ENCODE measurements at regions of chr7 and their contacts with region 1.

Region 1: DNA sequence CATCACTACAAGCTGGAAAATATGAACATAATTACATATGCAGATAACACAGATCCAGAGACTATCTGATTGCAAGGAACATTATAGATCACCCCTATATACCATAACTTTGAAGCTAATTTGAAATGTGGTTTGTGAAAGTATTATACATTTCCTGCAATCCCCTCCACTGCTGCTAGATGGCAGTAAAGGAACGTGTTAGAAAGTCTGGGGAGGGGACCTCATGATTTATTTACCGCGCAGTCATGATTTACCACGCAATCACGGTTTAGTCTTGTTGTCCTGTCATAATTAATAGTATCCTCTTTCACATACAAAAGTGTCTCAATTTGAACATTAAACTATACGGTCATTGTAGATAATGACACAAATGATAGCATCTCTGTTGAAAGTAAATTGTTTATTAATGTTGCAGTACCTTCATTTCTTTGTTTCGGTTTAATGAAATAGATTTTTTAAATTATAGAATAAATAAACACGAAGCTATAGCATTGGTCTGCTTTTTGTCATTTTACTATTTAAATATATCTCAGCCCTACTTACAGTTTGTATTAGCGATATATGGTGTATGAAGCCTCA is 145.3 kb upstream of the PRSS1 start:
- DNase-seq: peak; percentile 69
- ATAC-seq: peak; percentile 60
- H3K4me3 Mint-ChIP-seq: peak overlapping the region; percentile 31
- H3K27ac Mint-ChIP-seq: peak overlapping the region; percentile 67
- H3K4me1 Mint-ChIP-seq: peaks cover 23% of the 10 kb centered on the region
- H3K27me3 Mint-ChIP-seq: peaks cover 3% of the 10 kb centered on the region

Region 2: DNA sequence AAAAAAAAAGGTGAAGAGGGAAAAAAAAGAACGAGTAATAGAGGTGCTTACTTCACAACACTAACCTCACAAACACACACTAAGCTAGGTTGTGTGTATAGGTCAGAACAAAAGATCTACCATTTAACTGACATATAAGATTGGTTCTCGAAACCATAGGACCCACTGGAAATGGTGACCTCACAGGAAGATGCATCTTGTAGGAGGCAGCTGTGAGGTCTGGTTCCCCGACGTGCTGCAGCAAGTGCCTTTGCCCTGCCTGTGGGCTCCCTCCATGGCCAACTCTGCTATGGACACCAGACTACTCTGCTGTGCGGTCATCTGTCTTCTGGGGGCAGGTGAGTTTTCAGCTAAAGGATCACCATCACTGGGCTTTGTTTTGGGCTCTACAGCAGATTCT is 11.5 kb after region 1 on chr7:
- CTCF ChIA-PET with region 1: interaction called, 11 read pairs
- POLR2A ChIA-PET with region 1: no interaction called
- intact Hi-C with region 1: no loop called
- DNase-seq: no peak
- ATAC-seq: peak; percentile 21
- H3K4me3 Mint-ChIP-seq: peak overlapping the region; percentile 67
- H3K27ac Mint-ChIP-seq: peak overlapping the region; percentile 80
- H3K4me1 Mint-ChIP-seq: peaks cover 31% of the 10 kb centered on the region
- H3K27me3 Mint-ChIP-seq: no peaks in the 10 kb centered on the region